IMR-90 (cell line): ENCODE measurements at regions of chr4 and their contacts with region 1.

Region 1: GRCh38 chr4:187218705-187219245 is 495.1 kb upstream of the FAT1 start:
- DNase-seq: peak; percentile 74
- ATAC-seq: peak; percentile 95
- H3K4me3 ChIP-seq: peak overlapping the region; percentile 5; the same call in 1 of the 2 replicates
- H3K27ac ChIP-seq: peak overlapping the region; percentile 74; the same call in 1 of the 2 replicates
- H3K4me1 ChIP-seq: peaks cover 2% of the 10 kb centered on the region
- H3K27me3 ChIP-seq: no peaks in the 10 kb centered on the region
- CTCF ChIP-seq: no peak
- POLR2A ChIP-seq: no peak
- RAD21 ChIP-seq: no peak

Region 2: GRCh38 chr4:186669159-186669731 is 549.5 kb before region 1 on chr4:
- CTCF ChIA-PET with region 1: no interaction called
- POLR2A ChIA-PET with region 1: no interaction called
- dilution Hi-C with region 1: no loop called
- in situ Hi-C with region 1: no loop called
- intact Hi-C with region 1: no loop called
- DNase-seq: peak; percentile 81
- ATAC-seq: peak; percentile 68
- H3K4me3 ChIP-seq: no peak overlapping the region
- H3K27ac ChIP-seq: peak overlapping the region; percentile 89
- H3K4me1 ChIP-seq: peaks cover 22% of the 10 kb centered on the region
- H3K27me3 ChIP-seq: no peaks in the 10 kb centered on the region
- CTCF ChIP-seq: peak; percentile 56
- POLR2A ChIP-seq: no peak
- RAD21 ChIP-seq: peak; percentile 65

Region 3: GRCh38 chr4:186946682-186947294 is 272.0 kb before region 1 on chr4:
- CTCF ChIA-PET with region 1: no interaction called
- POLR2A ChIA-PET with region 1: no interaction called
- dilution Hi-C with region 1: no loop called
- in situ Hi-C with region 1: no loop called
- intact Hi-C with region 1: loop called (anchors 5 kb)
- DNase-seq: peak; percentile 34
- ATAC-seq: no peak
- H3K4me3 ChIP-seq: no peak overlapping the region
- H3K27ac ChIP-seq: no peak overlapping the region
- H3K4me1 ChIP-seq: peaks cover 7% of the 10 kb centered on the region
- H3K27me3 ChIP-seq: no peaks in the 10 kb centered on the region
- CTCF ChIP-seq: peak; percentile 31
- POLR2A ChIP-seq: no peak
- RAD21 ChIP-seq: peak; percentile 42

Region 4: GRCh38 chr4:187172340-187172761 is 46.4 kb before region 1 on chr4:
- CTCF ChIA-PET with region 1: no interaction called
- POLR2A ChIA-PET with region 1: no interaction called
- dilution Hi-C with region 1: no loop called
- in situ Hi-C with region 1: no loop called
- intact Hi-C with region 1: no loop called
- DNase-seq: no peak
- ATAC-seq: no peak
- H3K4me3 ChIP-seq: no peak overlapping the region
- H3K27ac ChIP-seq: no peak overlapping the region
- H3K4me1 ChIP-seq: peaks cover 2% of the 10 kb centered on the region; the same call in 1 of the 2 replicates
- H3K27me3 ChIP-seq: no peaks in the 10 kb centered on the region
- CTCF ChIP-seq: no peak
- POLR2A ChIP-seq: no peak
- RAD21 ChIP-seq: no peak

Region 5: GRCh38 chr4:187685247-187685646 is 466.5 kb after region 1 on chr4:
- CTCF ChIA-PET with region 1: no interaction called
- POLR2A ChIA-PET with region 1: no interaction called
- dilution Hi-C with region 1: no loop called
- in situ Hi-C with region 1: no loop called
- intact Hi-C with region 1: no loop called
- DNase-seq: no peak
- ATAC-seq: no peak
- H3K4me3 ChIP-seq: no peak overlapping the region
- H3K27ac ChIP-seq: no peak overlapping the region
- H3K4me1 ChIP-seq: no peaks in the 10 kb centered on the region
- H3K27me3 ChIP-seq: no peaks in the 10 kb centered on the region
- CTCF ChIP-seq: no peak
- POLR2A ChIP-seq: no peak
- RAD21 ChIP-seq: no peak